Right lobe of liver (tissue), 6 donors: ENCODE measurements at regions of chr6 and their contacts with region 1.

Region 1: DNA sequence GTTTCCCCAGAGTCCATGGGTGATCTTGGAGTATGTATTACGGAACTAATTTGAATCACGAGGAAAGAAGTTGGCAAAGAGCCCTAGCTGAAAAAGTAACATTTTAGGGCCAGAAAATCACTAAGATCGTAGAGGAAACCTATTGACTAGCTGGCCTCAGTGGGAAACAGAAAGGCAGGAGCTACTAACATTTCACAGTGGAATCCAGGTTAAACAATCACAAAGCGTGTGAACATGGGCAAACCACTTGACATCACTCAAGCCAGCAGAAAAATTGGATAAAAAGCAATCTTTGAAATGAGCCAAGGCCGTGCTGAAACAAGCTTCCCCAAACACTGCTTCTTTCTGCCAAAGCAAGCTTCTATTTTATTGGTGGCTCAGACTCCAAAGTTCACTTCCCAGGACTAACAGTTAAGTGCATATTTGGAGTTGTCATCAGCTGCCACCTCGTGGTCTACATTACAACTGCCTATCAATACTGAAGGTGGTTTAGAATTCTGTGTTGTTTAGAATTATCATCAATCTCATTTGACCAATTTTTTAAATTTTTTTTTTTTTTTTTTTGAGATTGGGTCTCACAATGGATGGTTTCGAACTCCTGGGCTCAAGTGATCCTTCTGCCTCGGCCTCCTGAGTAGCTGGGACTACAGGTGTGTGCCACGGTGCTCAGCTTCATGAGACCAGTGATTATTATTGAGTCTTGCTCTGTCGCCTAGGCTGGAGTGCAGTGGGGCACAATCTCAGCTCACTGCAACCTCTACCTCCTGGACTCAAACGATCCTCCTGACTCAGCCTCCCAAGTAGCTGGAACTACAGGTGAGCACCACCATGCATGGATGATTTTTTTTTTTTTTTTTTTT is 10.6 kb downstream of the RPS10 start:
- DNase-seq: peak in 1 of 3 donors; percentile 75
- ATAC-seq: peak; percentile 93 to 97 (median 96)
- H3K4me3 ChIP-seq: no peak overlapping the region
- H3K27ac ChIP-seq: peak overlapping the region; percentile 55 to 86 (median 82)
- H3K4me1 ChIP-seq: peaks cover 0 to 29% (median 11%) of the 10 kb centered on the region in 4 donors
- H3K27me3 ChIP-seq: no peaks in the 10 kb centered on the region
- CTCF ChIP-seq: peak; percentile 66 to 89 (median 78)
- POLR2A ChIP-seq: no peak

Region 2: GRCh38 chr6:34145161-34146020 is 269.8 kb before region 1 on chr6:
- intact Hi-C with region 1: no loop called
- DNase-seq: peak in 1 of 3 donors; percentile 53
- ATAC-seq: peak; percentile 39 to 69 (median 50)
- H3K4me3 ChIP-seq: peak overlapping the region in 1 of 3 donors; percentile 19
- H3K27ac ChIP-seq: no peak overlapping the region
- H3K4me1 ChIP-seq: peaks cover 0 to 16% (median 2%) of the 10 kb centered on the region in 4 donors
- H3K27me3 ChIP-seq: peaks cover 0 to 28% of the 10 kb centered on the region in 2 donors
- CTCF ChIP-seq: no peak
- POLR2A ChIP-seq: no peak

Region 3: GRCh38 chr6:34196126-34196830 is 219.0 kb before region 1 on chr6:
- intact Hi-C with region 1: loop called in 1 of 2 experiments (anchors 10 kb)
- DNase-seq: peak; percentile 87 to 90 (median 90)
- ATAC-seq: peak; percentile 99 to 100 (median 100)
- H3K4me3 ChIP-seq: peak overlapping the region; percentile 34 to 57 (median 44)
- H3K27ac ChIP-seq: no peak overlapping the region
- H3K4me1 ChIP-seq: no peaks in the 10 kb centered on the region
- H3K27me3 ChIP-seq: no peaks in the 10 kb centered on the region
- CTCF ChIP-seq: peak; percentile 97 to 100 (median 99)
- POLR2A ChIP-seq: no peak

Region 4: DNA sequence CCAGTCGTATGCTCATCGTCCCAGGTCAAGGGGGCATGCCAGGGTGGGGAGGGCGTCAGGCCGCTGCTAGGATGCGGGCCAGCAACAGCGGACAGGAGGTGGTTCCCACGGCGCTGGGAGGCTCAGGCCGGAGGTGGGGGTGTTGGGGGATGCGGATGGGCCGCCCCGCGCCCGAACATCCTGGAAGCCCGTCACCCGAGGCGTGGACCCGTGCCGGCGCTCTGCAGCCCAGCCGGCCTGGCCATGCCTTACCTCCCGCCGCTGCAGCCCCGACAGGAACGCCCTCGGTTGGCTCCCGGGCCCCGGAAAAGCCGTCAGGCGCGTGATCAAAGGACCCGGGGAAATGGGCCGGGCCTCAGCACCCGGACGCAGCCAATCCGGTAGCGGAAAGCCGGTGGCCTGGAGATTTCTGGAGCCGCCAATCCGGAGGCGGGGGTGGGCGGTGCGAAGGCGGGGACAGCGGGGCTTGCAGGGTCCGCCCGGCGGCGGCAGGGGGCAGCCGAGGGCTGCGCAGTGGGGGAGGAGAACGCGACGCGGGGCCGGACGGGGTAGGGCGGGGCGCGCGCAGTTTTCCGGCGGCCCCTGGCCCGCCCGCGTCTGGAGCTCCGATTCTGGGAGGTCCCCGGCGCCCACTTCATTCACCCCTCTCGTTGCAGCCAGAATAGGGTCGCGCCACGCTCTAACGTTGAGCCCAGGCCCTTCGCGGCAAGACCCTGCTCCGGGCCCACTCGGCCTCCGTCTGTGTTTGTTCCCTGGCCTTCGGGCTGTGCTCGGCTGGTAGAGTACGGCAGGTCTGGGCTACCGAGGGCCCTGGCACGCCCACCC is 166.3 kb before region 1 on chr6 and contains the start of gene SMIM29:
- intact Hi-C with region 1: loop called (anchors 5 to 10 kb)
- DNase-seq: peak; percentile 98 to 99 (median 99)
- ATAC-seq: peak; percentile 86 to 96 (median 94)
- H3K4me3 ChIP-seq: peak within 1 kb of the TSS; percentile 64 to 84 (median 66)
- H3K27ac ChIP-seq: peak within 1 kb of the TSS; percentile 84 to 92 (median 87)
- H3K4me1 ChIP-seq: peaks cover 0 to 12% (median 0%) of the 10 kb centered on the region in 4 donors
- H3K27me3 ChIP-seq: no peaks in the 10 kb centered on the region
- CTCF ChIP-seq: peak; percentile 90 to 97 (median 93)
- POLR2A ChIP-seq: peak; percentile 80
- total RNA-seq, gene SMIM29: 5.0 to 13.4 (median 8.8) TPM

Region 5: DNA sequence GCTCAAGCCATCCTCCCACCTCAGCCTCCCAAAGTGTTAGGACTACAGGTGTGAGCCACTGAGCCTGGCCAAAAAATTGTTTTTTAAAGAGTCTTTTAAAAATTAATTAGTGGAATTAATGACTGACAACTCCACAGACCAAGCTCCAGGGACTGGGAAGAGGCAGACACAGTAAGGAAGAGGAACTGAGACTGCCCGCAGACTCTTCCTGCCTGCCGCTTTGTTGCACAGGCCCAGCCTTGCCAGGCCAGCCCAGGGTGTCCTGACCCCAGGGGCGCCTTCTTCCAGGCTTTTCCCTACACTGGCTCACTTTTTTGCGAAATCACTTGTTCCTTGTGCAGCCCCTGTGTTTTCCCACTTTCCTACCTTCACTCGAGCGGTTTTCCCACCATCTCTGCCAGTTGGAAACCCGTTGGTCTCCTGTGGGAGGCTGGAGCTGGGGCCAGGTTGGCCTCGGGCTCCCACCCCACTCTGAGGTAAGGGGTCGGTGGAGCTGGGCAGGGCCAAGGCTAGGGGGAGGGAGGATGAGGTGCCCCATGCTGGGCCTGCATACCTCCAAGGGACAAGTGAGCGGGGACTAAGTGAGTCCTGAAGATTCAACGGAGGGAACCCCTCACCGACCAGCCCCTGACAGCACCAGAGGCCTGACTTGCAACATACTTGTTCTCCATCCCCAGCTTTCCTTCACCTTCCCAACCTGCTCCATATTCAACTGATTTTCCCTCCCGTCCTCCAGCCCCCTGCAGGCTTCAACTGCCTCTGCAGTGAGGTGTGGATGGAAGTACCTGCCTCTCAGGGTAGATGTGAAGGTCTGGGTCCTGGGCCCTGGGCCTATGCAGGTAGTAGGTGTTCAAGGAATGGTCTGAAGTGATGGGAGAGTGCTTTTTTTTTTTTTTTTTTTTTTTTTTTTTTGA is 143.0 kb before region 1 on chr6:
- intact Hi-C with region 1: no loop called
- DNase-seq: no peak
- ATAC-seq: peak; percentile 55 to 68 (median 58)
- H3K4me3 ChIP-seq: no peak overlapping the region
- H3K27ac ChIP-seq: no peak overlapping the region
- H3K4me1 ChIP-seq: peaks cover 0 to 10% (median 3%) of the 10 kb centered on the region in 4 donors
- H3K27me3 ChIP-seq: no peaks in the 10 kb centered on the region
- CTCF ChIP-seq: no peak
- POLR2A ChIP-seq: no peak

Region 6: DNA sequence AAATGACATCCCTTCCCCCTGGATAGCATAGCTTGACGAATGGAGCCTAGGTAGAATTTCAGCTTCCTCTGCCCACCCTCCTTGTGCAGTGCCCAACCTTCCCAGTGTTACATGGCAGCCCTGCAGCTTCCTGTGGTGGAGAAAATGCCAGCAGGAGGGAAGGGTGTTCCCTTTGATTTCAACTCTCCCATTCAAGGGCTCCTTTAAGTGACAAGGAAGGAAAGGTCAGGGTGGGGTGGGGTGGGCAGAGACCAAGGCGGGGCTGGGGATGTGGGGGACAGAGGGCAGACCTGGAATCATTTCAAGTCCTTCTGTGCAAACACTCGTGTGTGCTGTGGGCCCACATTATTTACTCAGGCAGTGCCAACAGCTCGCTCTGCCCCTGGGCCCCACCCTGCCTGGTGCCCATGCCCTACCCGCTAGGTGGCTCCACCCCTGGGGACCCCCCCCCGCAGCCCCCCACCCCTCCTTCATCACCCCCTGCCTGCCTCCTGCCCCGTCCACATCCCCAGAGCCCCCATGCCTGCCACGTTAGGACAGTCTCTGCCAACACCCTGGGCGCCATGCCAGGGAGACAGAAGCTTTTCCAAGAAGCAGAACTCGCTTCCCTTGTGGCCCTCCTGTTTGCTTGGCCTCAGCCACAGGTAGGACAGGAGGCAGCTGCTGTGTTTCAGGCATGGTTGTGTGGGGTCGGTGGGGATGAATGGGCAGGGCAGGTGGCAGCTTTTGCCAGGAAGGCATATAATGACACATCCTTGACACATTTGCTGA is 131.5 kb after region 1 on chr6:
- intact Hi-C with region 1: no loop called
- DNase-seq: peak in 1 of 3 donors; percentile 40
- ATAC-seq: peak; percentile 47 to 82 (median 66)
- H3K4me3 ChIP-seq: no peak overlapping the region
- H3K27ac ChIP-seq: no peak overlapping the region
- H3K4me1 ChIP-seq: peaks cover 0 to 10% (median 0%) of the 10 kb centered on the region in 4 donors
- H3K27me3 ChIP-seq: no peaks in the 10 kb centered on the region
- CTCF ChIP-seq: peak in 1 of 4 donors; percentile 8
- POLR2A ChIP-seq: no peak